CD4-positive, alpha-beta T cell (primary cell): ENCODE measurements at regions of chr4 and their contacts with region 1.

Region 1: GRCh38 chr4:80173401-80173800 is 23.9 kb upstream of the PRDM8 start:
- DNase-seq: peak in 12 of 14 experiments; percentile 23 to 89 (median 52)
- ATAC-seq: peak; percentile 96
- H3K4me3 ChIP-seq: no peak overlapping the region
- H3K4me3 Mint-ChIP-seq: peak overlapping the region; percentile 71
- H3K27ac ChIP-seq: peak overlapping the region; percentile 62 to 89
- H3K27ac Mint-ChIP-seq: peak overlapping the region; percentile 96
- H3K4me1 ChIP-seq: peaks cover 54% of the 10 kb centered on the region
- H3K4me1 Mint-ChIP-seq: peaks cover 65% of the 10 kb centered on the region
- H3K27me3 ChIP-seq: no peaks in the 10 kb centered on the region
- H3K27me3 Mint-ChIP-seq: no peaks in the 10 kb centered on the region
- CTCF ChIP-seq: no peak

Region 2: DNA sequence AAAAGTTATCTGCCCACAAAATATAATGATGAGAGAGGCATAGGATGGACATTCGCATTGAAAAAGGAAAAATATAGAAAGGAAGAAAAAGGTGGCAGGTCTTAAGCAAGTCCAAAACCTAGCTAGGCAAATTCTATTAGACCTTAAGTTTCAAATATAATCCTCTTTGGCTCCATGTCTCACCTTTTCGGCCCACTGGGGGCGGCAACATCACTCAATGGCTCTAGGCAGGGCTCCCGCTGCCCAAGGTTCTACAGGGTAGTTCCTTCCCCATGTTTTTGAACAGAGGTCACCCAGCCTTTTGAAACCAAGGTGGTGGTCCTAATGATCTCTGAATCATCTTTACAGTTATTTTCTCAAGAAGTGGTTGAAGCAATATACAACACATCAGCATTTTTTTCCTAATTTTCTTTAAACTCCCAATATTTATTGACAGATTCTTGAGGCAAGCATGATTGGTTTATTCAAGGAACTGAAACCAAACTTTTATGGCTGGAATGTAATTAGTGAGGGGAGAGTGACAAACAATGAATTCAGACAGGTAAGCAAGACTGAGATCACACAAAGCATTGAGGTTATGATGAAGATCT is 409.8 kb before region 1 on chr4:
- CTCF ChIA-PET with region 1: no interaction called
- POLR2A ChIA-PET with region 1: no interaction called
- intact Hi-C with region 1: no loop called
- DNase-seq: no peak
- ATAC-seq: no peak
- H3K4me3 ChIP-seq: no peak overlapping the region
- H3K4me3 Mint-ChIP-seq: no peak overlapping the region
- H3K27ac ChIP-seq: no peak overlapping the region
- H3K27ac Mint-ChIP-seq: no peak overlapping the region
- H3K4me1 ChIP-seq: no peaks in the 10 kb centered on the region
- H3K4me1 Mint-ChIP-seq: no peaks in the 10 kb centered on the region
- H3K27me3 ChIP-seq: peaks cover 0 to 4% of the 10 kb centered on the region in 2 experiments
- H3K27me3 Mint-ChIP-seq: no peaks in the 10 kb centered on the region
- CTCF ChIP-seq: no peak

Region 3: GRCh38 chr4:80033581-80033980 is 139.8 kb before region 1 on chr4:
- CTCF ChIA-PET with region 1: no interaction called
- POLR2A ChIA-PET with region 1: no interaction called
- intact Hi-C with region 1: no loop called
- DNase-seq: no peak
- ATAC-seq: no peak
- H3K4me3 ChIP-seq: no peak overlapping the region
- H3K4me3 Mint-ChIP-seq: no peak overlapping the region
- H3K27ac ChIP-seq: no peak overlapping the region
- H3K27ac Mint-ChIP-seq: no peak overlapping the region
- H3K4me1 ChIP-seq: peaks cover 12% of the 10 kb centered on the region
- H3K4me1 Mint-ChIP-seq: peaks cover 23% of the 10 kb centered on the region
- H3K27me3 ChIP-seq: no peaks in the 10 kb centered on the region
- H3K27me3 Mint-ChIP-seq: no peaks in the 10 kb centered on the region
- CTCF ChIP-seq: no peak

Region 4: DNA sequence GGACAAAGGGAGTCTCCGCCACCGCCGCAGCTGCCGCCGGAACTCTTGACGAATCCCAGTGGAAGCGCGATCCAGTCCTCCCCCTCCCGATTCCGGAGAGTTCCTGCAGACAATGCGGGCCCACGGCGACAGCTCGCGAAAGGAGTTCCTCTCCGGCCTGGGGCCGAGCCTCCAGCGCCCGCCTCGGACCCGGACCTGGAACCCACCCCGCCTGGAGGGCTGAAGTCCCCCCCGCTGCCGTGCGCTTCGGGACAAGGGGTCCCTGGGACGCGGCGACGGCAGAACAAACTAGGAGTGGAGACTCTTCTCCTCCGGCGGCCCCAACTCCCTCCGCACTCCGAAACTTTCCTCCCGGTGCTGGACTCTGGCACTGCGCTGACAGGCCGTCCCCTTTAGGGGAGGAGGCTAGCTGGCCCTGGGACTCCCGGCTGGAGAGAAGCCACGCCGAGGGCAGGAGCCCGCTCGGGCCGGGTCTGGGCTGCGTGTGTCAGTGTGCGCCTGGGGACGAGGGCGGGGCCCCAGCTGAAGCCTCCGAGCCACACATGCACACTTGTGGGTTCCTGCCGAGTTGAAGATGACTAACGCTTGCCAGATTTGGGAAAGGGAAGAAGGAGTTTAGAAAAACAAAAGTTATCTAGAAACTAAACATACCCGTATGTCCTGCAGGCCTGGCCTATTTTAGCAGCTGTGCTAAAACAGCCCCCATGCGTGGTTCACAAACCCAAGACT is 100.5 kb before region 1 on chr4 and contains the start of gene ANTXR2:
- CTCF ChIA-PET with region 1: no interaction called
- POLR2A ChIA-PET with region 1: interaction called, 22 read pairs
- intact Hi-C with region 1: loop called in 1 of 2 experiments (anchors 2 kb)
- DNase-seq: peak; percentile 37 to 88 (median 67)
- ATAC-seq: peak; percentile 80
- H3K4me3 ChIP-seq: peak within 1 kb of the TSS; percentile 90
- H3K4me3 Mint-ChIP-seq: peak within 1 kb of the TSS; percentile 99
- H3K27ac ChIP-seq: peak within 1 kb of the TSS; percentile 78 to 82
- H3K27ac Mint-ChIP-seq: peak within 1 kb of the TSS; percentile 95
- H3K4me1 ChIP-seq: peaks cover 22% of the 10 kb centered on the region
- H3K4me1 Mint-ChIP-seq: peaks cover 79% of the 10 kb centered on the region
- H3K27me3 ChIP-seq: no peaks in the 10 kb centered on the region
- H3K27me3 Mint-ChIP-seq: no peaks in the 10 kb centered on the region
- CTCF ChIP-seq: no peak
- total RNA-seq, gene ANTXR2: 15.3 to 16.7 TPM

Region 5: DNA sequence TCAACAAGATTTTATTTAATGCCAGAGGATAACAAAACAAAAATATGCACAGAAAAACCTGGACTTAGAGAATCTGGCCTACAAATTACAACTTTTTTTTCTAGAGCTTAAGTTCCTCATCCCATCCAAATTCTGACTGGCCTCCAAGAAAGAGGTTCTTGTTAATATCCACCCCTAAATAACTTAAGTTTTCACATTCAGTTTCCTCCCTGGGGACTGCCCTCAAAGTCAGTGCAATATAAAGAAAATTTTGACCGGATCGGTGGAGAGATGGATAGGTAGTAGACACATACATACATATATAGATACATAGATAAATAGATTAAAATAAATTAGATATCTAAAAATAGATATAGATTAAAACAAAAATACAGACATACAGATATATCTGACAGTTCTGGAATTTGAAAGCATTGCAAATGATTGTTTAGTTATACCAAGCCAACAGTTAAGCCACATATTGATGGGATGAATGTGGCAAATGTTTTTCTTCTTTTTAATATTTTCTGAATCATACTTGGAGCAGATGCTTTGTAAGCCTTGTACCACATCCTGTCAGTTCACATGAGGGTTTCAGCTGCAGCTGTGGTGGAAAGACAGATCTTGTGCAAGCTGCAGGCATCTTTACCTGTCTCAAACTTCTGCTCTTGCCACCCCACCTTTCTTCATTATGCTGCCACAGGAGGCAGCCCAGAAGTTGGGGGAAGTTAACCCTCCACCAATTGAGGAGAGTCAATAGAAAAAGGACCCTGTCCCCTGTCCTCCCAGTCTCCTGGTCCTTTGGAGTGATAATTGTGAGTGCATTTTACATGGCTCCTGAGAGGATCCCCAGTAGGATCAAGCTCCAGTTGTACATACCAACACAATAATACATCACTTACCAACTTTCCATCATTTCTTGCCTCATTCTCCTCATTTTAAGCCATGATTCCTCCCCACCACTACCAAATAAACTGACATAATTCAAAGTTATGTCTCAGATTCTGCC is 34.6 kb before region 1 on chr4:
- CTCF ChIA-PET with region 1: interaction called, 5 read pairs
- POLR2A ChIA-PET with region 1: interaction called, 42 read pairs
- intact Hi-C with region 1: loop called in 1 of 2 experiments (anchors 2 kb)
- DNase-seq: peak; percentile 30 to 85 (median 56)
- ATAC-seq: peak; percentile 98
- H3K4me3 ChIP-seq: no peak overlapping the region
- H3K4me3 Mint-ChIP-seq: peak overlapping the region; percentile 3
- H3K27ac ChIP-seq: peak overlapping the region; percentile 38 to 63
- H3K27ac Mint-ChIP-seq: peak overlapping the region; percentile 73
- H3K4me1 ChIP-seq: peaks cover 15% of the 10 kb centered on the region
- H3K4me1 Mint-ChIP-seq: peaks cover 58% of the 10 kb centered on the region
- H3K27me3 ChIP-seq: no peaks in the 10 kb centered on the region
- H3K27me3 Mint-ChIP-seq: no peaks in the 10 kb centered on the region
- CTCF ChIP-seq: no peak

Region 6: GRCh38 chr4:80153874-80154544 is 19.4 kb before region 1 on chr4:
- CTCF ChIA-PET with region 1: no interaction called
- POLR2A ChIA-PET with region 1: interaction called, 18 read pairs
- intact Hi-C with region 1: no loop called
- DNase-seq: no peak
- ATAC-seq: no peak
- H3K4me3 ChIP-seq: no peak overlapping the region
- H3K4me3 Mint-ChIP-seq: no peak overlapping the region
- H3K27ac ChIP-seq: no peak overlapping the region
- H3K27ac Mint-ChIP-seq: no peak overlapping the region
- H3K4me1 ChIP-seq: no peaks in the 10 kb centered on the region
- H3K4me1 Mint-ChIP-seq: peaks cover 15% of the 10 kb centered on the region
- H3K27me3 ChIP-seq: no peaks in the 10 kb centered on the region
- H3K27me3 Mint-ChIP-seq: no peaks in the 10 kb centered on the region
- CTCF ChIP-seq: no peak

Region 7: GRCh38 chr4:80215449-80216052 is 42.1 kb after region 1 on chr4:
- CTCF ChIA-PET with region 1: no interaction called
- POLR2A ChIA-PET with region 1: no interaction called
- intact Hi-C with region 1: no loop called
- DNase-seq: peak in 3 of 14 experiments; percentile 50 to 59 (median 51)
- ATAC-seq: no peak
- H3K4me3 ChIP-seq: no peak overlapping the region
- H3K4me3 Mint-ChIP-seq: no peak overlapping the region
- H3K27ac ChIP-seq: no peak overlapping the region
- H3K27ac Mint-ChIP-seq: no peak overlapping the region
- H3K4me1 ChIP-seq: no peaks in the 10 kb centered on the region
- H3K4me1 Mint-ChIP-seq: no peaks in the 10 kb centered on the region
- H3K27me3 ChIP-seq: peaks cover 3 to 30% of the 10 kb centered on the region in 2 experiments
- H3K27me3 Mint-ChIP-seq: peaks cover 38% of the 10 kb centered on the region
- CTCF ChIP-seq: peak; percentile 92

Region 8: DNA sequence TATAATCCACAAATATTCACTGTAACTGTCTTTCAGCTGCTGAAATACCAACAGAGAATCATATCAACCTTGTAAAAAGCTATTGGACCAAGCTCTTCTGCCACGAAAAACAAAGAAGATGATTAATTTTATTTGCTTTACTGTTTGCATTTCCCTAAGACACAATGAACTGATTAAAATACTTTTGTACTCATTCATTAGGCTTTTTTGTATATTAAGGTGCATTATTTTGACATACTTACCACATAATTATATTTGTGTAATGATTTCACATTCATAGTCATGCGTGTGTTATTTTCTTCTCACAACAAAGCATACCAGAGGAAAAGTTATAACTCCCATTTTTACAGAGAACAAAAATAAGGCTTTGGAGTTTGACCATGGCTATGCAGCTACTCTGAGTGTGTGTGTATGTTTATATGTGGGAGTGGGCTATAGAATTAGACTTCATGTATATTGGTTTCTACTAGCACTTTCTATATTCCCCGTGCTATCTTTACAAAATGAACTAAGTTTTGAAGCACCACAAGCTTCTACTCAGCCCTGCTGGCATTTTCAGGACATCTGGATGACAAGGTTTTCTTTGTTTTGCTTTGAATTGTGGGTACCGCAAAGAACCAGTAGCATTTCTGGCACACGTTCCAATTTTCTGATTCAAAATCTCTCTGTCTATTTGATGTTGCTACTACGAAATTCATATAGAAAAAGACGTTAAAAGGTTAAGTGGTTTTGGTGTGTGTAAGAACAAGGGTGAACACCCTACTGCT is 82.1 kb after region 1 on chr4:
- CTCF ChIA-PET with region 1: no interaction called
- POLR2A ChIA-PET with region 1: no interaction called
- intact Hi-C with region 1: no loop called
- DNase-seq: no peak
- ATAC-seq: no peak
- H3K4me3 ChIP-seq: no peak overlapping the region
- H3K4me3 Mint-ChIP-seq: no peak overlapping the region
- H3K27ac ChIP-seq: no peak overlapping the region
- H3K27ac Mint-ChIP-seq: no peak overlapping the region
- H3K4me1 ChIP-seq: no peaks in the 10 kb centered on the region
- H3K4me1 Mint-ChIP-seq: no peaks in the 10 kb centered on the region
- H3K27me3 ChIP-seq: peaks cover 0 to 40% of the 10 kb centered on the region in 2 experiments
- H3K27me3 Mint-ChIP-seq: peaks cover 67% of the 10 kb centered on the region
- CTCF ChIP-seq: no peak